ENCODE measurements at regions of chr10 and their contacts with region 1.

Region 1: DNA sequence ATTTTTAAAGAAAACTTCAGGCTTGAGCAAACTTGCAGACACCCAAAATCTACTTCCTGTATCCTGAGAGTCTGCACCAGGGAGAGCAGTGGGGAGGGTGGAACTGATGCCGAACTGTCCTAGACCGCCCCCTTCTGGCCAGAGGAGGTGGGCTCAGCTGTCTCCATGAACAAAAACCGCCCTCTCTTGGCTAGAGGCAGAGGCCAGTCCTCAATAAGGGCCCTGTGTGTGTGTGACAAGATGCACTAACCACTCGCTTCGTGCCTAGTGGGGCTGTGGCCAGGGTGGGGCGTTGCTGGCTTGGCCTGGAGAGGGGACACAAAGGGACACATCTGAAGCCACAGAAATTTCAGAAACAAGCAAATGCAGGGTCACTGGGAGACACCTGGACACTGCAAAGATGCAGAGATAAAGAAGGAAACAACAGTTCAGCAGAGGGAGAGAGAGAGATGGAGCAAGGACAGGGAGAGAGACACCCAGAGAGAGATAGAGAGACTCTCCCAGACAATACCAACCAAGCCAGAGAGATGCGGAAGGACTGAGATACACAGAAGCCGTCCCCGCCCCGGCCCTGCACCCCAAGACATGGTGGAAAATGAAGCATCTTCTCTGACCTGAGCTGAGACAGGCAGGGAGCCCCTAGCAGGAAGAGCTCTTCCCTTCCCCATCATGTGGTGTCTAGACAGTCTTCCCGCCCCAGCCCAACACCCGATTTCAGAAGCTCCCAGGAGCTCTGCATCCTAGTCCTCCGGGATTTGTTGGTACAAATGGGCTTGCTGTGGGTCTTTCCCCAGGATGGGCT is 22.7 kb upstream of the FXYD4 start:
- DNase-seq: peak; percentile 94
- ATAC-seq: peak; percentile 100
- H3K4me3 Mint-ChIP-seq: no peak overlapping the region
- H3K27ac Mint-ChIP-seq: peak overlapping the region; percentile 70
- H3K4me1 Mint-ChIP-seq: peaks cover 38% of the 10 kb centered on the region
- H3K27me3 Mint-ChIP-seq: peaks cover 16% of the 10 kb centered on the region

Region 2: DNA sequence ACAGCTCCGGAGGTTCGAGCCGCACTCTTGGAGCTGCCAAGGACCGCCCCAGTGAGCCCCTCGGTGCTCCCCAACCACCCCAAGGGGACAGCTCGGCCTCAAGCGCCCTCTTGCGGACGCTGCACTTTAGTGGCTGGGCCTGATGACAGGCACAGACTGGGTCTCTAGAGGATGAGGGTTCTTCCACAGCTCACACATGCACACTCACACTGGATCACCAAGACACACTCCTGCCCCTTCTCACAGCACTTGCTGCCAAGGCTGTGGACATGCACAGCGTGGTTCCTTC is 269.8 kb before region 1 on chr10:
- CTCF ChIA-PET with region 1: no interaction called
- POLR2A ChIA-PET with region 1: no interaction called
- DNase-seq: peak; percentile 40
- ATAC-seq: no peak
- H3K4me3 Mint-ChIP-seq: no peak overlapping the region
- H3K27ac Mint-ChIP-seq: no peak overlapping the region
- H3K4me1 Mint-ChIP-seq: peaks cover 13% of the 10 kb centered on the region
- H3K27me3 Mint-ChIP-seq: peaks cover 33% of the 10 kb centered on the region

Region 3: DNA sequence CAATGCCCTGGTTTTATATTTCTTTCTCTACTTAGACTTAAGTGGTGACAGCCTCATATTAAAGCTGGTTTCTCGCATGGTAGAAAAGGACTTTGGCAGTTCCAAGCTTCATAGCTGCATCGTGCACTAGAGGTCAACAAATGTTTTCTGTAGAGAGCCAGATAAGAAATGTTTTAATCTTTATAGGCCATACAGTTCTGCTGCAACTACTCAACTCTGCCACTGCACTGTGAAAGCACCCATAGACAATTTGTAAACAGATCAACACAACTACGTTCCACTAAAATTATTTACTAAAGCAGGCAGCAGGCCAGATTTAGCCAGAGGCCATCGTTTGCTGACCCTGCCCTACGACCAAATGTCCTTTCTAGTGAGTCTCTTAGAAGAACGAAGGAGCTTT is 173.7 kb before region 1 on chr10:
- CTCF ChIA-PET with region 1: no interaction called
- POLR2A ChIA-PET with region 1: no interaction called
- DNase-seq: no peak
- ATAC-seq: no peak
- H3K4me3 Mint-ChIP-seq: no peak overlapping the region
- H3K27ac Mint-ChIP-seq: no peak overlapping the region
- H3K4me1 Mint-ChIP-seq: peaks cover 22% of the 10 kb centered on the region
- H3K27me3 Mint-ChIP-seq: no peaks in the 10 kb centered on the region

Region 4: GRCh38 chr10:43265799-43266721 is 82.7 kb before region 1 on chr10:
- CTCF ChIA-PET with region 1: interaction called, 18 read pairs
- POLR2A ChIA-PET with region 1: no interaction called
- DNase-seq: peak; percentile 66
- ATAC-seq: peak; percentile 78
- H3K4me3 Mint-ChIP-seq: peak overlapping the region; percentile 71
- H3K27ac Mint-ChIP-seq: peak overlapping the region; percentile 20
- H3K4me1 Mint-ChIP-seq: peaks cover 5% of the 10 kb centered on the region
- H3K27me3 Mint-ChIP-seq: peaks cover 52% of the 10 kb centered on the region

Region 5: DNA sequence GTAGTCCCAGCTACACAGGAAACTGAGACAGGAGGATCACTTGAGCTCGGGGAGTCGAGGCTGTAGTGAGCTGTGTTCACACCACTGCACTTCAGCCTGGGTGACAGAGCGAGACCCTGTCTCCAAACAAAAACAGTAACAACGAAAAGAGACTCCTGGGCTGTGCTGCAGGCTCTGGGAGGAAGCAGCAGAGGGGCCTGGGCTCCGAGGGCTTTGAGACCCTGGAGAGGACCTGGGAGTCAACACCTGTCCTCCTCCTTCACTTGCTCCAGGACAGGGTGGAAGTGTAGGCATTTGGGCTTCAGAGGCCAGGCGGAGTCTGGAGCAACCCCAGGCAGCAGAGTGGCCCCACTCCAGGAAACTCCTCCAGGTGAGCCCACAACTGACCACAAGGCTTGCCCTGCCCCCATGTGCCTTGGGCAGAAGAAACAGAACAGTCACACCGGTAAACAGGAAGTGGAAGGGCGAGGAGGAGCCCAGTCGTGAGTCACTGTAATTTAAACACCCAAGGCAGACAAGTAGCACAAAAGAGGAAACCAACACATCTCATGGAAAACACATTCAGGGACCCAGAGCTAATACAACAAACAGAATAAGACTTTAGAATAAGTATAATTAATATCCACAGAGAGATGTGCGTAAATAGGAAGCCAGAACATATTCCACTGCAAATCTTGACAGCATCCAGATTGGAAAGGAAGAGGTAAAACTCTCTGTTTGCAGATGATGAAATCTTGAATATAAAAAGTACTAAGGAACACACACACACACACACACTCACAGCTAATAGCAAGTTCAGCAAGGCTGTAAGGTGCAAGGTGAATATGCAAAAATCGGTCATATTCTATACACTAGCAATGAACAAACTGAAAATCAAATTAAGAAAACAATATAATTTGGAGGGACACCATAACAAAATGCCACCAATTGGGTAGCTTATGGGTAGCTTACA is 61.4 kb before region 1 on chr10:
- CTCF ChIA-PET with region 1: interaction called, 97 read pairs
- POLR2A ChIA-PET with region 1: interaction called, 3 read pairs
- DNase-seq: peak; percentile 83
- ATAC-seq: peak; percentile 83
- H3K4me3 Mint-ChIP-seq: peak overlapping the region; percentile 32
- H3K27ac Mint-ChIP-seq: peak overlapping the region; percentile 85
- H3K4me1 Mint-ChIP-seq: peaks cover 57% of the 10 kb centered on the region
- H3K27me3 Mint-ChIP-seq: peaks cover 11% of the 10 kb centered on the region

Region 6: DNA sequence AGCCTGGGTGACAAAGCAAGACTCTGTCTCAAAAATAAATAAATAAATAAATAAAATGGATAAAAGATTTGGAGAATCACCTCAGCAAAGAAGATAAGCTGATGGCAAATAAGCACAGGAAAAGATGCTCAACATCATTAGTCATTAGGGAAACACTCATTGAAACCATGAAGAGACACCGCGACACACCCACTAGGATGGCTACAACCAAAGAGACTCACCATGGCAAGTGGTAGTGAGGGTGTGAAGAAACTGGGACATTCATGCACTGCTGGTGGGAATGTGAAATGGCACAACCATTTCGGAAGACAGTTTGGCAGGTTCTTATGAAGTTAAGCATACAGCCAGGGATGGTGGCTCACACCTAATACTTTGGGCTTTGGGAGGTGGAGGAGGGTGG is 15.1 kb before region 1 on chr10:
- CTCF ChIA-PET with region 1: no interaction called
- POLR2A ChIA-PET with region 1: no interaction called
- DNase-seq: no peak
- ATAC-seq: no peak
- H3K4me3 Mint-ChIP-seq: no peak overlapping the region
- H3K27ac Mint-ChIP-seq: peak overlapping the region; percentile 6
- H3K4me1 Mint-ChIP-seq: peaks cover 33% of the 10 kb centered on the region
- H3K27me3 Mint-ChIP-seq: peaks cover 3% of the 10 kb centered on the region

Region 7: DNA sequence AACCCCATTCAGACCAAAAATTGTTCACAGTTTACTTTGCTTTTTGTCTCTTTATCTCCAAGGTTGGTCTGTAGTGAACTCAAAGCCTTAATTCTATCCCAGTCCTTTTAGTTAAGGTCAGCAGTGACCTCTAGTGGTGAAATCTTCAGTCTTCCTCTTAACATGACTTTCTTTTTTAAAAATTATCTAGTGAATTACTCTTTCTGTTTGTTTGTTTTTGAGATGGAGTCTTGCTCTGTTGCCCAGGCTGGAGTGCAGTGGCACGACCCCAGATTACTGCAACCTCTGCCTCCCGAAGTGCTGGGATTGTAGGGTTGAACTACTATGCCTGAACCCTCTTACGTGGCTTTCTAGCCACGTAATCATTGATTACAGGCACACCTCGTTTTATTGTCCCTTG is 113.2 kb after region 1 on chr10:
- CTCF ChIA-PET with region 1: interaction called, 16 read pairs
- POLR2A ChIA-PET with region 1: no interaction called
- DNase-seq: peak; percentile 70
- ATAC-seq: peak; percentile 88
- H3K4me3 Mint-ChIP-seq: no peak overlapping the region
- H3K27ac Mint-ChIP-seq: peak overlapping the region; percentile 0
- H3K4me1 Mint-ChIP-seq: peaks cover 10% of the 10 kb centered on the region
- H3K27me3 Mint-ChIP-seq: no peaks in the 10 kb centered on the region

Measured in activated CD8-positive, alpha-beta T cell treated with anti-CD3 and anti-CD28 coated beads, Interleukin-2, amount 10 ng/mL, durations not matched to agents 7 days and 5 days (primary cell).